ENCODE measurements at regions of chr20 and their contacts with region 1.

Region 1: GRCh38 chr20:53122853-53123252 is 150.7 kb downstream of the TSHZ2 start:
- DNase-seq: no peak
- ATAC-seq: no peak
- H3K4me3 Mint-ChIP-seq: no peak overlapping the region
- H3K27ac Mint-ChIP-seq: no peak overlapping the region
- H3K4me1 Mint-ChIP-seq: peaks cover 20% of the 10 kb centered on the region
- H3K27me3 Mint-ChIP-seq: peaks cover 1% of the 10 kb centered on the region

Region 2: GRCh38 chr20:52859156-52859876 is 263.5 kb before region 1 on chr20:
- CTCF ChIA-PET with region 1: no interaction called
- POLR2A ChIA-PET with region 1: no interaction called
- intact Hi-C with region 1: no loop called
- DNase-seq: no peak
- ATAC-seq: peak; percentile 26
- H3K4me3 Mint-ChIP-seq: no peak overlapping the region
- H3K27ac Mint-ChIP-seq: no peak overlapping the region
- H3K4me1 Mint-ChIP-seq: no peaks in the 10 kb centered on the region
- H3K27me3 Mint-ChIP-seq: peaks cover 2% of the 10 kb centered on the region

Region 3: DNA sequence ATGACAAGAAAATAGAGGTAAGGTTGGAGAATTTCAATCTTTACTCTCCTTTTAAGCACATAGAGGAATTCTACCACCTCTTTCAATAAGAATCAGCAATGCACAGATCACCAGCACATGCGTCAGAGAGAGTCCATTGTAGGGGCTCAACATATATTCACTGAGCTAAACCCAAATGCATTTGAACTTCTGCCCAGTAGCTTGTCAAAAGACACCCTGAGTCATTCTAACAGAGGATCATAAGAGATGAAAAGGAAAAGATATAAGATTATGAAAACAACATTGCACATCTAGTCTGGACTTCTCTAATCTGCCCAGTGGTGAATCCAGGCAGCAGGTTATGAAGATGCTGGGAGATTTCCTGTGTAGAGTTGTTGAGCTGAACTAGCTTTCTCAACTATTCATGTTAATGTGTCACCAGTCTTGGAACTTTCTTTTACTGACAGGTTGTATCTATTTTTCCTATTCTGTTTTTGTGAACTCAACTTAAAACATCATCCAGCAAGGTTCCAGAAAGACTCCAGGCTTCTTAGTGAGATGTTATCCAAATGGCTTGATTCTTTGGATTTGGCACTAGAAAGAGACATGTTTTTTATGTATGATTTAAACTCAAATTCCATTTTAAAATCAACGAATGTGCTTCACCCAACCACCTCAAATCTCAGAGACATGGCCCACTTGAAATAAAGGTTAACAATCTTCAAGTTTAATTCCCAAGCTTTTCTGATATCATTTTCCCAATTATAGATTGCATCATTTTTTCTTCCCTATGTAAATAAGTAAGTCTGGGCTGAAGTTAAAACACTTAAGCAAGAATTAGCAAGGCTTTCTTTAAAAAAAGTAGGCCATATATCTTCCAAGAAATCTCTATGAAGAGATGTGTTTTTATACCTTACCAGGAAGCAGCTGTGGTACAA is 61.4 kb before region 1 on chr20:
- CTCF ChIA-PET with region 1: no interaction called
- POLR2A ChIA-PET with region 1: no interaction called
- intact Hi-C with region 1: no loop called
- DNase-seq: no peak
- ATAC-seq: peak; percentile 66
- H3K4me3 Mint-ChIP-seq: no peak overlapping the region
- H3K27ac Mint-ChIP-seq: peak overlapping the region; percentile 72
- H3K4me1 Mint-ChIP-seq: peaks cover 44% of the 10 kb centered on the region
- H3K27me3 Mint-ChIP-seq: no peaks in the 10 kb centered on the region

Region 4: DNA sequence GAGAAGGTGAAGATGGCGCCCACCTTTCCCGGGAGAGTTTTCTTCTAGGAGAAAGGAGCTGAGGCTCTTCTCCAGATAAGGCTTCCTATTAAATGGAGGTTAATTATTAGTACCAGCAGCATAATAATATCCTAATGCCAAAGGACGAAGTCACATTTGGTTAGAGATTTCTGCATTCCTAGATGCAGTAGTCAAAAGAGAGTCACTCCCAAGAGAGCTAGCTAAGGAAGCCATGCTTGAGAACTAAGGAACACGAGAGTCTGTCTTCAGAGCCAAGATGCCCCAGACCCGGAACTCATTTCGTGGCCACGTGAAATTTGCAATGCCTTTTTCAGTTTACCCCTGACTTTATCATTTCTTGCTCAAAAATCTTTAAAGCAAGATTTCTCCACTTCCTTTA is 18.0 kb before region 1 on chr20:
- CTCF ChIA-PET with region 1: interaction called, 3 read pairs
- POLR2A ChIA-PET with region 1: interaction called, 10 read pairs
- intact Hi-C with region 1: no loop called
- DNase-seq: no peak
- ATAC-seq: no peak
- H3K4me3 Mint-ChIP-seq: no peak overlapping the region
- H3K27ac Mint-ChIP-seq: no peak overlapping the region
- H3K4me1 Mint-ChIP-seq: no peaks in the 10 kb centered on the region
- H3K27me3 Mint-ChIP-seq: no peaks in the 10 kb centered on the region